MCF 10A (cell line): ENCODE measurements at regions of chr15 and their contacts with region 1.

Region 1: GRCh38 chr15:64355944-64356709 is at the start of gene CSNK1G1:
- DNase-seq: peak; percentile 96
- H3K4me3 Mint-ChIP-seq: peak within 1 kb of the TSS; percentile 85
- H3K27ac Mint-ChIP-seq: peak within 1 kb of the TSS; percentile 95
- H3K4me1 Mint-ChIP-seq: peaks cover 12% of the 10 kb centered on the region
- H3K27me3 Mint-ChIP-seq: no peaks in the 10 kb centered on the region
- CTCF ChIP-seq: peak; percentile 62
- total RNA-seq, gene CSNK1G1: 29.1 and 31.0 TPM in 2 replicates

Region 2: GRCh38 chr15:64019764-64020163 is 336.4 kb before region 1 on chr15:
- CTCF ChIA-PET with region 1: no interaction called
- POLR2A ChIA-PET with region 1: no interaction called
- intact Hi-C with region 1: no loop called
- DNase-seq: no peak
- H3K4me3 Mint-ChIP-seq: no peak overlapping the region
- H3K27ac Mint-ChIP-seq: no peak overlapping the region
- H3K4me1 Mint-ChIP-seq: peaks cover 31% of the 10 kb centered on the region
- H3K27me3 Mint-ChIP-seq: no peaks in the 10 kb centered on the region
- CTCF ChIP-seq: no peak

Region 3: DNA sequence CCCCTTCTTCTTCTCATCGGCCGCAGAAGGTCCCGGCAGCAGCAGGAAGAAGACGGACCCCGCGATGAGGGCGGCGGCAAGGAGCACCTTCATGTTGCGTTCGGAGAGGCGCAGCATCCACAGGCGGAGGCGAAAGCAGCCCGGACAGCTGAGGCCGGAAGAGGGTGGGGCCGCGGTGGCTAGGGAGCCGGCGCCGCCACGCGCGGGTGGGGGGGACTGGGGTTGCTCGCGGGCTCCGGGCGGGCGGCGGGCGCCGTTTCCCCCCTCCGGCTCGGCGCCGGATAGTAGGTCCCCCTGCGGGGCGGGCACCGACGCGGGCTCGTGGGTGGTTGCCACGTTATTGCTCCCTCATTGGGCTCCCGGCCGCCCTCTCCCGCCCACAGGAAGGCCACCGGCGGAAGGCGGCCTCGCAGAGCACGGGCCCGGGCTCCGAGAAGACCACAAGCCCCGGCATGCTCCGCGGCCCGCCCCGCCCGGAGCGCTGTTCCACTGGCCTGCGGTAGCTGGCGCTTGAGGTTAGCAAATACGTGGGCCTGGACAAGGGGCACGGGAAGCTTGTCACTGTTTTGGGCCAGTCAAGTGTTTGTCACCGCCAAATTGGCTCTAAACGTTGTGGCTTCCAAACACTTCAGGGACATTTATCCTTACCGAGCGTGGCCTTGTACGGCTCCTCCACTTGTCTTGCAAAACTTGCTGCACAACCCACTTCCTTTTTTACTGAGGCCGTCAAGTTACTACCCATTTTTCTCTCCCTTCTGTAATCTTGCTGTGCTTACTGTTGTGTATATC is 193.1 kb before region 1 on chr15 and contains the start of gene PPIB:
- CTCF ChIA-PET with region 1: no interaction called
- POLR2A ChIA-PET with region 1: interaction called, 24 read pairs
- intact Hi-C with region 1: loop called (anchors 1 kb)
- DNase-seq: peak; percentile 97
- H3K4me3 Mint-ChIP-seq: peak within 1 kb of the TSS; percentile 91
- H3K27ac Mint-ChIP-seq: peak within 1 kb of the TSS; percentile 86
- H3K4me1 Mint-ChIP-seq: peaks cover 29% of the 10 kb centered on the region
- H3K27me3 Mint-ChIP-seq: no peaks in the 10 kb centered on the region
- CTCF ChIP-seq: peak; percentile 13
- total RNA-seq, gene PPIB: 874 and 1,247 TPM in 2 replicates

Region 4: DNA sequence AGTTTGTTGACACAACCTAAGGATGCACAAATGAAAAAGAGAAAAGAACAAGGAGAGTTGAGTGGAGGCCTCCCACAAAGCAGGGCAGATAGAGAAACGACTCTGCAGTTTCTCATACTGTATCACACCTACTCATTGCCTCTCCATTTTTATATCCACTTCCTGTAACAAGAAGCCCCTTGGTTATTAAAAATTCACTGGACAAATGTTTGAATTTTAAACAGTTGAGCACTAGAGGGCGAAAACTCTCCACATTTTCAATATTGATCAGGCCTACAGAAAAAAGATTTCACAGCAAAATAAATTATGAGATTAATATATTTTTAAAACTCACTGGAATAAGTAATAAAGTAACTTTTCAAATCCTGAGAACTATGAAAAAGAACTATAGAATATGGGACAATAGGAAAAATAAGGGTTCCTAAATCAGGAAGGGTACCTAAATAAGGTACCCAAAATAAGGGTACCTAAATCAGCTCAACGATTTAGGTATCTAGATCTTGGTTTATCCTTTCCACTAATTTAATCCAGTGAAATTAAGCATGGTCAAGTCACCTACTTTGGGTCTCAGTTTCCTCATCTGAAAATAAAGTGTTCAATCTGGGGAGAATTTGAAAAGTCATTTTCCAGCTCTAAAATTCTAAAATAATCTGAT is 146.3 kb before region 1 on chr15:
- CTCF ChIA-PET with region 1: interaction called, 9 read pairs
- POLR2A ChIA-PET with region 1: interaction called, 4 read pairs
- intact Hi-C with region 1: loop called (anchors 1 kb)
- DNase-seq: peak; percentile 35
- H3K4me3 Mint-ChIP-seq: no peak overlapping the region
- H3K27ac Mint-ChIP-seq: no peak overlapping the region
- H3K4me1 Mint-ChIP-seq: peaks cover 7% of the 10 kb centered on the region
- H3K27me3 Mint-ChIP-seq: no peaks in the 10 kb centered on the region
- CTCF ChIP-seq: peak; percentile 43

Region 5: GRCh38 chr15:64247906-64248541 is 108.1 kb before region 1 on chr15:
- CTCF ChIA-PET with region 1: no interaction called
- POLR2A ChIA-PET with region 1: interaction called, 12 read pairs
- intact Hi-C with region 1: no loop called
- DNase-seq: peak; percentile 80
- H3K4me3 Mint-ChIP-seq: no peak overlapping the region
- H3K27ac Mint-ChIP-seq: peak overlapping the region; percentile 96
- H3K4me1 Mint-ChIP-seq: peaks cover 32% of the 10 kb centered on the region
- H3K27me3 Mint-ChIP-seq: no peaks in the 10 kb centered on the region
- CTCF ChIP-seq: no peak

Region 6: DNA sequence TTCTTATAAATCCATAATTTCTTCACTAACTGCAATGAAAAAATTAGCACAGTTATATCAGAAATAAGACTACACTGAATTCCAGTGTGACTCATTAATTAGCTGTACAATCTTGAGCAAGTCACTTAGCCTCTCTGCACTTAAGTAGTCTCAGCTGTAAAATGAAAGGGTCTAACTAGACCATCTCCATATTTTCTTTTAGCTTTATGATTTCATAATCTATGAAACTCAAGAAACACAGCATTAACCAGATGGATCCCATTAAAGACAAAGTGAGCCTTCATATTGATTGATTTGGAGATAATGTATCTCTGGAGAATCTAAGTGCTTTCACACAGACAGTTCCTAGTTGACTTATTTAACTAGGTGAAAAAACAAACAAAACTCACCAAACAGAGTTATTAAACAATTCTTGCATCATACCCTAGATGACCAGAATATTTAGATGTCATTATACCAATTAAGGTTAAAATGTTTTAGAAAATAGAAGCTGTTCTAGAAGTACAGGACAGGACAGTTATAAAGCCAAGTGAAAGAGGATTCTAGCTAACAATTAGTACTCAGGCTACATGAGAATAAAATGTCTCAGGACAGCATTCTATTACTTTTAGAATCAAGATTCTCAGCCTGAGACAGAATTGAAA is 11.4 kb before region 1 on chr15:
- CTCF ChIA-PET with region 1: interaction called, 6 read pairs
- POLR2A ChIA-PET with region 1: interaction called, 15 read pairs
- intact Hi-C with region 1: no loop called
- DNase-seq: peak; percentile 9
- H3K4me3 Mint-ChIP-seq: no peak overlapping the region
- H3K27ac Mint-ChIP-seq: no peak overlapping the region
- H3K4me1 Mint-ChIP-seq: peaks cover 16% of the 10 kb centered on the region
- H3K27me3 Mint-ChIP-seq: no peaks in the 10 kb centered on the region
- CTCF ChIP-seq: no peak

Region 7: GRCh38 chr15:64369078-64369607 is 13.0 kb after region 1 on chr15:
- CTCF ChIA-PET with region 1: interaction called, 5 read pairs
- POLR2A ChIA-PET with region 1: interaction called, 14 read pairs
- intact Hi-C with region 1: no loop called
- DNase-seq: no peak
- H3K4me3 Mint-ChIP-seq: no peak overlapping the region
- H3K27ac Mint-ChIP-seq: no peak overlapping the region
- H3K4me1 Mint-ChIP-seq: no peaks in the 10 kb centered on the region
- H3K27me3 Mint-ChIP-seq: no peaks in the 10 kb centered on the region
- CTCF ChIP-seq: no peak

Region 8: GRCh38 chr15:64387562-64388168 is 31.5 kb after region 1 on chr15 and contains the start of gene TRIP4:
- CTCF ChIA-PET with region 1: interaction called, 3 read pairs
- POLR2A ChIA-PET with region 1: interaction called, 54 read pairs
- intact Hi-C with region 1: no loop called
- DNase-seq: peak; percentile 94
- H3K4me3 Mint-ChIP-seq: peak within 1 kb of the TSS; percentile 100
- H3K27ac Mint-ChIP-seq: peak within 1 kb of the TSS; percentile 94
- H3K4me1 Mint-ChIP-seq: peaks cover 16% of the 10 kb centered on the region
- H3K27me3 Mint-ChIP-seq: no peaks in the 10 kb centered on the region
- CTCF ChIP-seq: no peak
- total RNA-seq, gene TRIP4: 19.8 and 26.0 TPM in 2 replicates

Region 9: DNA sequence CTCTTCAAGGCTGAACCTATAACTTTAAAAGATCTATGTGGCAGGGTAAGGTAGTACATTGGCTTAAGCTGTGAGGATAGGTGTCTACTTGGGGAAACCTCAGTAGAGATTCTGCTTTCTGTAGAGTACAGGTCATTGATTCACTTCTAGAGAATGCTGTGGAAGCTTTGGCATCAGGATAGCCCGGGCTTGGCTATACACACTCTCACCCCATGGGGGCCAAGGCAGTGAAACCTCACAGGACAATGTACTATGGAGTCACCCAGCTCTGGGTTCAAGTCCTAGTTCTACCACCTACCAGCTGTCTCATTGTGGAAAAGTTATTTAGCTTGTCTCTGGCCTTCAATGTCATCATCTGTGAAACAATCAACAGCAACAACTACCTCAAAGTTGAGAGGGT is 664.3 kb after region 1 on chr15:
- CTCF ChIA-PET with region 1: no interaction called
- POLR2A ChIA-PET with region 1: no interaction called
- intact Hi-C with region 1: no loop called
- DNase-seq: no peak
- H3K4me3 Mint-ChIP-seq: no peak overlapping the region
- H3K27ac Mint-ChIP-seq: no peak overlapping the region
- H3K4me1 Mint-ChIP-seq: peaks cover 10% of the 10 kb centered on the region
- H3K27me3 Mint-ChIP-seq: no peaks in the 10 kb centered on the region
- CTCF ChIP-seq: no peak